Left ventricle myocardium superior (tissue), 1 donor: ENCODE measurements at regions of chr7 and their contacts with region 1.

Region 1: GRCh38 chr7:115229401-115230105 is 307.7 kb downstream of the MDFIC start:
- DNase-seq: no peak
- ATAC-seq: no peak

Region 2: DNA sequence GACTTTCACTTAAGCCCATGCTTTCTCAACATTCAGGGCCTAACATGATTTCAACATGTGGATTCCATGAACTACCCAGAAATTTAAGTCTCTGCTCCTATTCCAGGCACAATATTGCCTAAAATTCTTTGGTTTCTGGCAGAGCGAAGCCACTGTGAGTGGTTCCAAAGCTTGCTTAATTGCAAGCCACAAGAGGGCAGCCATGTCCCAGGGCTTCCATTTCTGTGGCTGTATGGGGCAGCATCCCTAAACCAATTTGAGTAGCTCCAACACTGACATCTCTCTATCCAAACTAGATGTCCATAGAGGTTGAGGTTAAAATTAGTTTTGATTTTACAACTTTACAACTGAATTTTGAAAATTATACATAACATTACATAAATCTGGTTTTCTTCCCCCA is 364.0 kb before region 1 on chr7:
- intact Hi-C with region 1: loop called (anchors 10 kb)
- DNase-seq: peak; percentile 57
- ATAC-seq: peak; percentile 74